ENCODE measurements at regions of chr13 and their contacts with region 1.

Region 1: DNA sequence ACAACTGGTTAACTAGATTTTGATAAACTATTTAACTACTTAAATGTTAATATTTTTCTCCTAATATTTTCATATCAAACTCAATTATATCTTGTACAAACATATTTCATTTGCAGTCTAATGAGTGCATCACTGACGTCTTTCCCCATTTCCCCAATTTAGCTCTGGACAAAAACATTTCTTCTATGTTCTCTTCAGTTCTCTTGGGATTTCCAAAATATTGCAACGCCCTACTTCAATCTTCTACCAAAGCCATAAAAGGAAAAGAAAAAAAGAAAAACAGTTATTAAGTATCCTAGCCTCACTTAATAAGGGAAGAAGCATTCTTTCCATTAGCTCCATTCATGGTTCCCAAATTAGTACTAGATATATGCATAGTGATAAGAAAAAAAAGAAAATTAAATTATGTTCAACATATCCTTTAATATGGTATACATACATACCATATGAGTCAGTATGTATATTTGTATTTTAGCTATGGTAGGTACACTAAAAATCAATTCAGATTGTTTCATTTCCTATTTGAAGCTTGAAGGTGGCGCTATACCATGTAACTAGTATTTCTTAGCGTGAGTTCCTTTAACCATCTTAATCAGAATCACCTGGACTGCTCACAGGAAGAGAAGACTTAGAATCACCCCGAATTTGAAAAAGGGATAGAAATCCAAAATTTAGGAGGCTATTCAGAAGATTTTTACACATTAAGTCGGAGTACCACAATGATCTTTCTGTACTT is 9.9 kb downstream of the FBXL3 start:
- DNase-seq: no peak
- H3K4me3 ChIP-seq: no peak overlapping the region
- H3K27me3 ChIP-seq: no peaks in the 10 kb centered on the region
- CTCF ChIP-seq: no peak

Region 2: GRCh38 chr13:77002590-77003190 is 14.4 kb before region 1 on chr13:
- CTCF ChIA-PET with region 1: interaction called, 10 read pairs
- POLR2A ChIA-PET with region 1: interaction called, 6 read pairs
- DNase-seq: no peak
- H3K4me3 ChIP-seq: no peak overlapping the region
- H3K27me3 ChIP-seq: no peaks in the 10 kb centered on the region
- CTCF ChIP-seq: peak; percentile 74

Region 3: GRCh38 chr13:77048681-77049080 is 31.6 kb after region 1 on chr13:
- CTCF ChIA-PET with region 1: no interaction called
- POLR2A ChIA-PET with region 1: no interaction called
- DNase-seq: no peak
- H3K4me3 ChIP-seq: no peak overlapping the region
- H3K27me3 ChIP-seq: no peaks in the 10 kb centered on the region
- CTCF ChIP-seq: no peak

Measured in BJ (cell line).